ENCODE measurements at regions of chr11 and their contacts with region 1.

Region 1: DNA sequence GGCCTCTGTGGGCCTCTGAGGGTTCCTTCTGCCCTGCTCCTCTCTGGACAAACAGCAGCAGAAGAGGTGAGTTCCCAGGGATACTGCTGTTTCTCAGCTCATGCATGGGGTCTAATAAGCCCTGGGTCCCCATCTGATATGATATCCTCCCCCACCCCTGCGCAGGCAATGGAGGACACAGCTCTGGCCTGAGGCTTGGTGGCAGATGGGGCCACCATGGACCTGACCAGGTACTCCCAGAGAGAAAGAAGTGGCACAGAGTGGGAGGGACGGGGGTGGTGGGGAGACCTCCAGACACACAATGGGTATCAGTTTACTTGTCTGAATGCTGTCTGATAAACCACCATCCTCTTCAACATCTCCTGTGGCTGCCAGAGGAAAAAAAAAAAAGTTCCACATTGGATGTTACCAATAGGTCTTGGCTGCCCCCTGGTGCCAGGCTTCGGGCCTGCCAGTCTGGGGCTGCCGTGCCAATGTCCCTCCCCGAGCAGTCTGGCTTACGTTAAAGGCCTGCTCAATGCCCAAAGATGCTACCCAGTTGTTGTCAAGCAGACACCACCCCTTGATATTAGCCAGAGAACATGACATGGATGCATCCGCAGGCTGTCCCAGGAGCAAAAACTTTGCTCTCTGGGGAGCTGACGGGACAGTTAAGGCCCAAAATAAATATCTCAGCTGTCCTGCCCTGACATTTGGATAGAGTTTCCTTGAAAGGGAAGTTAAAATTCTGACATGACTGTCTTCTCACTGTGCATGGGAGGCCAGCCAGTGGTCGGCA is 27.9 kb upstream of the ABCC8 start:
- DNase-seq: peak; percentile 53 to 87
- H3K4me3 ChIP-seq: no peak overlapping the region
- H3K4me1 ChIP-seq: no peaks in the 10 kb centered on the region
- H3K27me3 ChIP-seq: peaks cover 4% of the 10 kb centered on the region; the same call in 1 of the 2 replicates

Region 2: GRCh38 chr11:17129003-17129402 is 375.5 kb before region 1 on chr11:
- in situ Hi-C with region 1: no loop called
- DNase-seq: no peak
- H3K4me3 ChIP-seq: no peak overlapping the region
- H3K4me1 ChIP-seq: no peaks in the 10 kb centered on the region
- H3K27me3 ChIP-seq: no peaks in the 10 kb centered on the region

Region 3: GRCh38 chr11:17224727-17225126 is 279.8 kb before region 1 on chr11:
- in situ Hi-C with region 1: loop called (anchors 5 kb)
- DNase-seq: no peak
- H3K4me3 ChIP-seq: no peak overlapping the region
- H3K4me1 ChIP-seq: no peaks in the 10 kb centered on the region
- H3K27me3 ChIP-seq: no peaks in the 10 kb centered on the region

Region 4: GRCh38 chr11:17890325-17890724 is 385.8 kb after region 1 on chr11:
- in situ Hi-C with region 1: no loop called
- DNase-seq: no peak
- H3K4me3 ChIP-seq: no peak overlapping the region
- H3K4me1 ChIP-seq: no peaks in the 10 kb centered on the region
- H3K27me3 ChIP-seq: no peaks in the 10 kb centered on the region

Region 5: GRCh38 chr11:18352581-18352980 is 848.1 kb after region 1 on chr11:
- in situ Hi-C with region 1: no loop called
- DNase-seq: no peak
- H3K4me3 ChIP-seq: no peak overlapping the region
- H3K4me1 ChIP-seq: no peaks in the 10 kb centered on the region
- H3K27me3 ChIP-seq: no peaks in the 10 kb centered on the region